Right ventricle myocardium inferior (tissue), 1 donor: ENCODE measurements at regions of chrX and their contacts with region 1.

Region 1: DNA sequence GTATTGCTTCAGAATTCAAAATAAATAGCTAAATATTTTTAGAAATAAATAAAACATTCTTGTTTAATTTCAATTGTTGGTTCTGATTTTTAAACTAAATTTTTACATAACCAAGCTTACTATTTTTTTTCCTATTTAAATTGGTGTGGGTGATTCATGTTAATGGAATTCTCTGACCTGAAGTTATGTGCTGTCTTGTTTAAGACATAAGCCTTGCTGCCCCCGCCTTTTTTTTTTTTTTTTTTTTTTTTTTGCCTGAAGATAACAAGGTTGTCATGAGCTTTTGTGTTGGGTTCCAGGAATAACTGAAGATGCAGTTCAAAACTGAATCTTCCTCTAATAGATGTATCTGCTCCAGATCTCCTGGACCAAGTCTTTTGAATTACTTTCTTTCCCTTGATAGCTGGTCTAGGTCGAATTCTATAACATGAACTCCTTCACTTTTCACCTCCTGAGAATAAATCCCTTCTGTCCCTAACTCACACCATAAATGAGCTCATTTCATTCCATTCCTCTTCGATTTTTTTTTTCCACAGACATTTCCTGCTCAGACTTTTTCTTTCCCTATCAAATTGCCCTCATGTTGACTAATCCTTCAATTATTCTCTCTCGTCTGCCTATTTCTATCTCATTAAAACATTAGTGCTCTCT is 261.5 kb upstream of the FTHL17 start:
- DNase-seq: no peak
- ATAC-seq: no peak

Region 2: GRCh38 chrX:31266172-31267076 is 66.9 kb before region 1 on chrX:
- intact Hi-C with region 1: loop called (anchors 10 kb)
- DNase-seq: peak; percentile 72
- ATAC-seq: peak; percentile 95